ENCODE measurements at regions of chr15 and their contacts with region 1.

Region 1: GRCh38 chr15:76139368-76140073 is 79.7 kb downstream of the TMEM266 start:
- DNase-seq: peak in 1 of 2 donors; percentile 86
- H3K4me3 ChIP-seq: peak overlapping the region in 1 of 2 donors; percentile 26
- H3K27ac ChIP-seq: no peak overlapping the region
- H3K4me1 ChIP-seq: peaks cover 0 to 5% of the 10 kb centered on the region in 2 donors
- H3K27me3 ChIP-seq: no peaks in the 10 kb centered on the region
- CTCF ChIP-seq: peak; percentile 75 to 88 (median 87)

Region 2: DNA sequence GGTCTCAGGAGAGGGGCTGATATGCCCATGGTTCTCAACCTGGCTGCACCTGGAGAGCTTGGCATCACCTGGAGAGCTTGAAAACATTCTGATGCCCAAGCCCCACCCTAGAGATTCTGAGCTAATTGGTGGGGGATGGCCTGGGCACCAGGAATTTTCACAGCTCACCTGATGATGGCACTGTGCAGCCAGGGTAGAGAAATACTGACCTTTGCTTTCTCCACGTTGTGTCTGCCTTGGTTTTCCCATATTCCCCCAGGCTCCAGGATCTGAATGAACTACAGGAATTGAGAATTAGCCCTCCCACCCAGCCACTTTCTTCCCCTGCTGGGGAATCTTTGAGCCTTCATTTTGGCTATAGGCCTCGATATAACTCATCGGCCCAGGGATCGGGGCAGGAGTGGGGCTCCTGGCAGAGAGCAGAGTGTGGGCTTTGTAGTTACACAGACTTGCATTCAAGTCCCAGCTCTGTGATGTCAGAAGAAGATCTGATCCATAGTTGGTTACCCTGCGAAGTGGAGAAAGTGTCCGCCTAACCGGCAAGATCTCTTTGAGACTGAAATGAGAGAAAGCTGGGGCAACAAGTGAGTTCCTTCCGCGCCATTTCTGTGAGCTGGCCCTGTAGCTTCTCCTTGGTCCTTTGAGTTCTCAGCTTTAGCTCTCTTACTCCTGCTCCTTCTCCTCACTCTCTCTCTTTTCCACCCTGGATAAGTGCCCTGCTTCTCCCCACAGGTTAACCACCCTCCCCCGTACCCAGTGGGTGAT is 329.4 kb before region 1 on chr15:
- intact Hi-C with region 1: loop called (anchors 10 kb)
- DNase-seq: no peak
- H3K4me3 ChIP-seq: no peak overlapping the region
- H3K27ac ChIP-seq: no peak overlapping the region
- H3K4me1 ChIP-seq: no peaks in the 10 kb centered on the region
- H3K27me3 ChIP-seq: no peaks in the 10 kb centered on the region
- CTCF ChIP-seq: peak in 1 of 3 experiments; percentile 14

Region 3: DNA sequence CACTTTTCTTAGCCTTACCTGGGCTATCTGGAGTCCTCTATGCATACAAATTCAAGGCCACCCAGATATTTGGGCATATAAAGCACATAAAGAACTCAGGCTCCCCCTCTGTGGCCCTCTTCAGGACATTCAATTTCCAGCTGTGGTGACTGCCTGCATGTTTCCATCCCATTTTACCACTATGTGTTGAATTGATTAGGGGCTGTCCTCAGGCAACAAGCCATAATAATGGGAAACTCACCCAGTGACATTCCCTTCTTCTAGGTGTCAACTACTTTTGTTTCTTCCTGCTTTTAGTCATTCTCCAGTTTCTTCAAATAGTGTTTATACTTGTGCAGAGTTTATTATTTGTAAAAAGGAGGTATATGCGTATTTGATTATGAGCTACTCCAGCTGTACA is 145.3 kb before region 1 on chr15:
- intact Hi-C with region 1: no loop called
- DNase-seq: no peak
- H3K4me3 ChIP-seq: no peak overlapping the region
- H3K27ac ChIP-seq: no peak overlapping the region
- H3K4me1 ChIP-seq: no peaks in the 10 kb centered on the region
- H3K27me3 ChIP-seq: no peaks in the 10 kb centered on the region
- CTCF ChIP-seq: no peak

Region 4: DNA sequence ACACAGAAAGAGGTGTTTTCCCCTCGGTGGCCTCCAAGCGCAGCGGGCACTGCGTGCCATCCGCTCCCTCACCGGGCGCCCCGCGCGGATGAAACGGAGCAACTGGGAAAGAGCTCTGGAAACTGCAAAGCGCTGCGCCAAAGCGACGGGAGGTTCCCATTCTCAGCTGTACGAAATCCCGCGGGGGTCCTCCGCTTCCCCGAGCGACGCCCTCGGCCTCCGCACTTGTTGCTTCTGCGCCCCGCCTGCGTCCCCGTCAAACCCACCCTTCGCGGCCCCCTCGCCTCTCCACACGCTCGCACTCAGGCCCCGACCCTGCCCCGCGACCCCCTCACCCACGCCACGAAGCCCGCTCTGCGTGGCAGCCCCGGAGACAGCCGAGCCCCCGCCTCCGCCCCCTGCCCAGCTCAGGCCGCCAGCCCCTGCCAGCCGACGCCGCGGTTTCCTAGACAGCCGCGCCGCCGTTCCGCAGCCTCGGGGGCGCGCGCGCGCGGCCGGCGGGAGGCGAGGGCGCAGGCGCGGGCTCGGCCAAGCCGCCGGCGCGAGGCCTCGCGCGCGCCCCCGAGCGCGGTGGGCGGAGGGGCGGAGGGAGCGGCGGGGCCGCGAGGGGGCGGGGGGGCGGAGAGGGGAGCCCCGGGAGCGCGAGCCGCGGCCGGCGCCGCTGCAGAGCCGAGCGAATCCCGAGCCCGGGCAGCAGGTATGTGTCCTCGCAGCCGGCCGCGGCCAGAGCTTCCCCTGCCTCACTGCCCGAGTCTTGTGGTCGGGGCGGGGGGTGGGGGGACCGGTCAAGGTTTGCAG is 80.0 kb before region 1 on chr15 and contains the start of gene TMEM266:
- intact Hi-C with region 1: loop called (anchors 2 kb)
- DNase-seq: peak in 1 of 2 donors; percentile 64
- H3K4me3 ChIP-seq: peak within 1 kb of the TSS; percentile 76 to 82
- H3K27ac ChIP-seq: no peak within 1 kb of the TSS
- H3K4me1 ChIP-seq: peaks cover 4 to 10% of the 10 kb centered on the region in 2 donors
- H3K27me3 ChIP-seq: no peaks in the 10 kb centered on the region
- CTCF ChIP-seq: peak in 1 of 3 experiments; percentile 5
- total RNA-seq, gene TMEM266: not detected

Measured in ascending aorta (tissue), 2 donors.